HCT116 (cell line): ENCODE measurements at regions of chr22 and their contacts with region 1.

Region 1: DNA sequence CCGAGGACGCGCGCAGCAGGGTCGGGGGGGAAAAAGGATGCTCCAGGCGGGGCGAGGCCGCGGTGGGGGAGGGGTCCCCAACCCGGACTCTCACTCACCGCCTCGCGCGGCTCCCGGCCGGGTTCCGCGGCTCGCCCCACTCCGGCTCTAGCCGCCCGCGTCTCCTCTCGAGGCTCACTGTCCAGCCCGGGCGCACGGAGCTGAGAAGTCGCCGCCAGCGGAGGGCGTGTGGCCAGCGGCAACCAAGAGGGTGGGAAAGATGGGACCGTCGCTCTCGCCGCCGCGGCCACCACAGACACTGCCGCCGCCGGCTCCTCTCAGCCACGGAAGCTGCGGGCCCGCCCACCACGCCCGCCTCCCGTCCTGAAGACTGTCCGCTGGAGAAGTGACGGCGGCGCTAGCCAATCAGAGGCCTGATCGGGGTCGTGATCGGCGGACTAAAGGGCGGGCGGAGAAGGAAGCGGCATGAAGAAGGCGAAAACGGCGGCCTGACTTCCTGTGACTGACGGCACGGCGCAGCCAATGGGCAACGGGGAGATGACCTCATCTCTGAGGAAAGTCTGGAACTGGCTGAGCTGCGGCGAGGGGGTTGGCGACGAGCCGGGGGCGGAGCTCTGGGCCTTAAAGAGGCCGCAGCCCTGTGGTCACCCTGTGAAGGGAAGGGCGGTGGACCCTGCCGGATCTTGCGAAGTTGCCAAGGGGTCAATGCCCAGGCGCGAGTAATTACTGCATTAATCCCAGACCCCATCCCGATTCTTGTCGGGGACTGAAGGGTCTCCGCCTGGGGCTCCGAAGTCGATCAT is at the start of gene MRTFA:
- DNase-seq: peak; percentile 99
- ATAC-seq: peak; percentile 93
- H3K4me3 ChIP-seq: peak within 1 kb of the TSS; percentile 79 to 90
- H3K27ac ChIP-seq: peak within 1 kb of the TSS; percentile 60
- H3K4me1 ChIP-seq: peaks cover 11 to 27% of the 10 kb centered on the region in 2 experiments; a peak in 3 of 4 replicates
- H3K27me3 ChIP-seq: no peaks in the 10 kb centered on the region
- CTCF ChIP-seq: no peak
- POLR2A ChIP-seq: peak; percentile 28
- RAD21 ChIP-seq: no peak
- total RNA-seq, gene MRTFA: 28.0 TPM

Region 2: GRCh38 chr22:39514373-39514973 is 1122.1 kb before region 1 on chr22:
- CTCF ChIA-PET with region 1: no interaction called
- POLR2A ChIA-PET with region 1: no interaction called
- RAD21 ChIA-PET with region 1: no interaction called
- intact Hi-C with region 1: no loop called
- DNase-seq: no peak
- ATAC-seq: peak; percentile 51; the same call in 1 of the 2 replicates
- H3K4me3 ChIP-seq: no peak overlapping the region
- H3K27ac ChIP-seq: no peak overlapping the region
- H3K4me1 ChIP-seq: peaks cover 10 to 20% of the 10 kb centered on the region in 2 experiments
- H3K27me3 ChIP-seq: no peaks in the 10 kb centered on the region
- CTCF ChIP-seq: peak; percentile 64 to 84 (median 80); a peak in 5 of 6 replicates
- POLR2A ChIP-seq: no peak
- RAD21 ChIP-seq: peak; percentile 53; the same call in 1 of the 2 replicates

Region 3: DNA sequence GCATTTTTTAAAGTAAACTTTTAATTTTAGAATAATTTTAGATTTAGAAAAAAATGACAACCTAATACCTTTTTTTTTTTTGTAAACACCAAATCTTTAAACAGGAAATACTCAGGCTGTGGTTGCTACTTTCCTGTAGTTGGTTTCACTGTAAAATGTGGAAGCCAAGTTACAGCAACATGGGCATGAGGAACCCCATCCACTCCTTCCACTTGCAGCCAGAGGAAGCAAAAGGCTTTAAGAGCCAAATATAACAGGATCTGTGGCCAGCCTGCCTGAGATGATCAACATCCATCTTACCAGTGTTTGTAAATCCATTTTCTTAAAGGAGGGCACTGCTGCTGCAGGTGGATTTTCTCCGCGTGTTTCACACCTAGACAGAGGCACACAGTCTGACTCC is 392.7 kb before region 1 on chr22:
- CTCF ChIA-PET with region 1: no interaction called
- POLR2A ChIA-PET with region 1: no interaction called
- RAD21 ChIA-PET with region 1: no interaction called
- intact Hi-C with region 1: no loop called
- DNase-seq: no peak
- ATAC-seq: no peak
- H3K4me3 ChIP-seq: no peak overlapping the region
- H3K27ac ChIP-seq: no peak overlapping the region
- H3K4me1 ChIP-seq: peaks cover 26 to 27% of the 10 kb centered on the region in 2 experiments
- H3K27me3 ChIP-seq: no peaks in the 10 kb centered on the region
- CTCF ChIP-seq: no peak
- POLR2A ChIP-seq: no peak
- RAD21 ChIP-seq: no peak

Region 4: GRCh38 chr22:40376149-40376548 is 260.4 kb before region 1 on chr22:
- CTCF ChIA-PET with region 1: no interaction called
- POLR2A ChIA-PET with region 1: no interaction called
- RAD21 ChIA-PET with region 1: no interaction called
- intact Hi-C with region 1: loop called (anchors 10 kb)
- DNase-seq: no peak
- ATAC-seq: no peak
- H3K4me3 ChIP-seq: no peak overlapping the region
- H3K27ac ChIP-seq: no peak overlapping the region
- H3K4me1 ChIP-seq: peaks cover 8 to 24% of the 10 kb centered on the region in 2 experiments; a peak in 3 of 4 replicates
- H3K27me3 ChIP-seq: no peaks in the 10 kb centered on the region
- CTCF ChIP-seq: no peak
- POLR2A ChIP-seq: no peak
- RAD21 ChIP-seq: no peak

Region 5: DNA sequence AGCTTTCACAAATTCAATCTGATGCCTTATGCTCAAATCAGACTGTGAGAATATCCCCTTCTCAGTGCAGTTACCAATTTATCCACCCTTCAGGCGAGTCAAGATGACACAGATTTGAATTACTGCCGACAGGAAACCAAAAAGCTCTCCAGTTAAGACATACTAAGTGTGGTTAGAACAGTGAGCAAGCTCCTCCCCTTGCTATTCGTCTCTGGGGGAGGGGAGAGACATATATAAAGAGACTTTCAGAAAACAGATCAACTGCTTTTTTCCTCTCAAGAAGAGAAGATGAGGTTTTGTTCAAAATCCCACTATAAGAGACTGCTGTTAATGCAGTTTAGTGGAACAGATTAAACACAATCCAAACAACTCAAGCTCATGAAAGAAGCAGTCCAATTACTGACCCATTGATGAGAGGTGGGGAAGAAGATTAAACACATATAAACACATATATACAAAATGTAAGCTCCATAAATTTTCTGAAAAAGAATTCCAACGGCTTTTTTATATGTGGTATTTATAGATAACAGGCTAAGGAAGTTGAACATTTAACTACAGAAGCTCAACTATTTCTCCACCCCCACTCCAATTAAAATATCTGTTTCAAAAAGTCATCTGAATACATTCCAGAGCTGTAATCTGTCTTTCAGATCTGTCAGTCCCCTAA is 102.7 kb before region 1 on chr22:
- CTCF ChIA-PET with region 1: no interaction called
- POLR2A ChIA-PET with region 1: no interaction called
- RAD21 ChIA-PET with region 1: no interaction called
- intact Hi-C with region 1: no loop called
- DNase-seq: no peak
- ATAC-seq: no peak
- H3K4me3 ChIP-seq: no peak overlapping the region
- H3K27ac ChIP-seq: no peak overlapping the region
- H3K4me1 ChIP-seq: peaks cover 11 to 24% of the 10 kb centered on the region in 2 experiments
- H3K27me3 ChIP-seq: no peaks in the 10 kb centered on the region
- CTCF ChIP-seq: no peak
- POLR2A ChIP-seq: no peak
- RAD21 ChIP-seq: no peak

Region 6: GRCh38 chr22:40593460-40594273 is 42.9 kb before region 1 on chr22:
- CTCF ChIA-PET with region 1: no interaction called
- POLR2A ChIA-PET with region 1: no interaction called
- RAD21 ChIA-PET with region 1: no interaction called
- intact Hi-C with region 1: no loop called
- DNase-seq: no peak
- ATAC-seq: no peak
- H3K4me3 ChIP-seq: no peak overlapping the region
- H3K27ac ChIP-seq: no peak overlapping the region
- H3K4me1 ChIP-seq: peaks cover 42 to 51% of the 10 kb centered on the region in 2 experiments
- H3K27me3 ChIP-seq: no peaks in the 10 kb centered on the region
- CTCF ChIP-seq: no peak
- POLR2A ChIP-seq: no peak
- RAD21 ChIP-seq: no peak

Region 7: DNA sequence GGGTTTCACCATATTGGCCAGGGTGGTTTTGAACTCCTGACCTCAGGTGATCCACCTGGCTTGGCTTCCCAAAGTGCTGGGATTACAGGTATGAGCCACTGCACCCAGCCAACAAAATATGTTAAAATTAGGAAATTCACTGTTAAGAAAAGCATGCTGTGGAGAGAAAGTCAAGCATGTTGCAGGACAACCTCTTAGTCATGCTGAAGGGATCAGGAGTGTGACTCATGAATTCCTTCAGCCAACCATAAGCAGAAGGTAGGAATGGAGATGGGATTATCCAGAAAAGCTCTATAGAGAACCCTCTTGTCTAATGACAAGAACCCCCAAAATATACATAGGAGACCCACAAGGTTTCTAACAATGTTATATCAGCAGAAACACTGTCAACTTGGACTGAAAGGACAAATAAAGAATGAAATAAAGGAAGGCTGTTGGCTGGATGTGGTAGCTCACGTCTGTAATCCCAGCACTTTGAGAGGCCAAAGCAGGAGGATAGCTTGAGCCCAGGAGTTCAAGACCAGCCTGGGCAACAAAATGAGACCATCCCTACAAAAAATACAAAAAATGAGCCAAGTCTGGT is 16.0 kb before region 1 on chr22:
- CTCF ChIA-PET with region 1: no interaction called
- POLR2A ChIA-PET with region 1: interaction called, 11 read pairs
- RAD21 ChIA-PET with region 1: no interaction called
- intact Hi-C with region 1: no loop called
- DNase-seq: peak; percentile 66
- ATAC-seq: peak; percentile 95
- H3K4me3 ChIP-seq: peak overlapping the region in 1 of 2 experiments; percentile 9; a peak in 2 of 4 replicates
- H3K27ac ChIP-seq: peak overlapping the region; percentile 60; the same call in 1 of the 2 replicates
- H3K4me1 ChIP-seq: peaks cover 9 to 18% of the 10 kb centered on the region in 2 experiments
- H3K27me3 ChIP-seq: no peaks in the 10 kb centered on the region
- CTCF ChIP-seq: no peak
- POLR2A ChIP-seq: no peak
- RAD21 ChIP-seq: no peak

Region 8: GRCh38 chr22:40651563-40652501 is 15.3 kb after region 1 on chr22:
- CTCF ChIA-PET with region 1: interaction called, 4 read pairs
- POLR2A ChIA-PET with region 1: interaction called, 14 read pairs
- RAD21 ChIA-PET with region 1: interaction called in 1 of 2 experiments, 3 read pairs
- intact Hi-C with region 1: no loop called
- DNase-seq: peak; percentile 95
- ATAC-seq: peak; percentile 94
- H3K4me3 ChIP-seq: peak overlapping the region; percentile 66 to 67
- H3K27ac ChIP-seq: peak overlapping the region; percentile 98
- H3K4me1 ChIP-seq: peaks cover 9 to 39% of the 10 kb centered on the region in 2 experiments
- H3K27me3 ChIP-seq: no peaks in the 10 kb centered on the region
- CTCF ChIP-seq: no peak
- POLR2A ChIP-seq: peak; percentile 93
- RAD21 ChIP-seq: no peak